Activated CD8-positive, alpha-beta T cell treated with anti-CD3 and anti-CD28 coated beads, Interleukin-2, amount 10 ng/mL, durations not matched to agents 7 days and 5 days (primary cell): ENCODE measurements at regions of chr15 and their contacts with region 1.

Region 1: GRCh38 chr15:99704444-99704838 is 28.8 kb downstream of the LYSMD4 start:
- DNase-seq: peak; percentile 65
- ATAC-seq: peak; percentile 71
- H3K4me3 Mint-ChIP-seq: no peak overlapping the region
- H3K27ac Mint-ChIP-seq: no peak overlapping the region
- H3K4me1 Mint-ChIP-seq: peaks cover 48% of the 10 kb centered on the region
- H3K27me3 Mint-ChIP-seq: no peaks in the 10 kb centered on the region

Region 2: GRCh38 chr15:99264125-99264524 is 440.3 kb before region 1 on chr15:
- CTCF ChIA-PET with region 1: interaction called, 120 read pairs
- POLR2A ChIA-PET with region 1: no interaction called
- DNase-seq: no peak
- ATAC-seq: peak; percentile 36
- H3K4me3 Mint-ChIP-seq: no peak overlapping the region
- H3K27ac Mint-ChIP-seq: no peak overlapping the region
- H3K4me1 Mint-ChIP-seq: peaks cover 23% of the 10 kb centered on the region
- H3K27me3 Mint-ChIP-seq: no peaks in the 10 kb centered on the region

Region 3: DNA sequence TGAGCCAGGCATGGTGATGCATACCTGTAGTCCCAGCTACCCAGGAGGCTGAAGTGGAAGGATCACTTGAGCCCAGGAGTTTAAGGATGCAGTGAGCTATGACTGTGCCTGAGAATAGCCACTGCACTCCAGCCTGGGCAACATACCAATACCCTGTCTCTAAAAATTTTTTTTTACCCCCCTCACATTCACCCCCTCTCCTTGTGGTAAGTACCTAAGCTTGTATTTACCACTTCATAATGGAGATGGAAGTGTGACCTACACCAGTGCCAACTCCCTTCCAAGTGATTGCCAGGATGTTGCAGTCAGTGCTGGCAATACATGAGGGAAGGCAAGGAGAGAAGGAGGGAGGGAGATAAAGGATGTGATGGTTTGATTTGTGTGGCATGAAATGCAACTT is 368.9 kb before region 1 on chr15:
- CTCF ChIA-PET with region 1: interaction called, 28 read pairs
- POLR2A ChIA-PET with region 1: no interaction called
- DNase-seq: no peak
- ATAC-seq: no peak
- H3K4me3 Mint-ChIP-seq: no peak overlapping the region
- H3K27ac Mint-ChIP-seq: no peak overlapping the region
- H3K4me1 Mint-ChIP-seq: no peaks in the 10 kb centered on the region
- H3K27me3 Mint-ChIP-seq: no peaks in the 10 kb centered on the region

Region 4: DNA sequence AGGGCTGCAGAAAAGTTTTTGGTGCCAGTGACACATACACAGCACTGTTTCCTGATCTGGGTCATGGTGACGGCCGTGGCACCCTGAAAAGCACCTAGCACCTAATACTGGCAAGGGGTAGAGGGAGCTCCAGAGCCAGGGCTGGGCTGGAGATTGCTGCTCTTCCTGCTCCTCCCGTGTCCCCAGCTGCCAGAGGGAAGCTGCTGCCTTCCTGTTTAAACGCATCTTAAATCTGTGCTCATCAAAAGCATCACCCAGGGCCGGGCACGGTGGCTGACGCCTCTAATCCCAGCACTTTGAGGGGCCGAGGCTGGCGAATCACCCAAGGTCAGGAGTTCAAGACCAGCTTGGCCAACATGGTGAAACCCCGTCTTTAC is 295.4 kb before region 1 on chr15:
- CTCF ChIA-PET with region 1: interaction called, 36 read pairs
- POLR2A ChIA-PET with region 1: no interaction called
- DNase-seq: peak; percentile 36
- ATAC-seq: peak; percentile 42
- H3K4me3 Mint-ChIP-seq: no peak overlapping the region
- H3K27ac Mint-ChIP-seq: no peak overlapping the region
- H3K4me1 Mint-ChIP-seq: peaks cover 15% of the 10 kb centered on the region
- H3K27me3 Mint-ChIP-seq: no peaks in the 10 kb centered on the region

Region 5: GRCh38 chr15:99565299-99566156 is 138.9 kb before region 1 on chr15 and contains the start of gene MEF2A:
- CTCF ChIA-PET with region 1: interaction called, 66 read pairs
- POLR2A ChIA-PET with region 1: interaction called, 6 read pairs
- DNase-seq: peak; percentile 94
- ATAC-seq: peak; percentile 82
- H3K4me3 Mint-ChIP-seq: peak within 1 kb of the TSS; percentile 93
- H3K27ac Mint-ChIP-seq: peak within 1 kb of the TSS; percentile 94
- H3K4me1 Mint-ChIP-seq: peaks cover 41% of the 10 kb centered on the region
- H3K27me3 Mint-ChIP-seq: peaks cover 10% of the 10 kb centered on the region
- total RNA-seq, gene MEF2A: 26.7 to 27.0 TPM

Region 6: GRCh38 chr15:99733268-99734039 is 29.0 kb after region 1 on chr15 and contains the start of gene LYSMD4:
- CTCF ChIA-PET with region 1: interaction called, 28 read pairs
- POLR2A ChIA-PET with region 1: interaction called, 18 read pairs
- DNase-seq: peak; percentile 99
- ATAC-seq: peak; percentile 100
- H3K4me3 Mint-ChIP-seq: peak within 1 kb of the TSS; percentile 77
- H3K27ac Mint-ChIP-seq: peak within 1 kb of the TSS; percentile 90
- H3K4me1 Mint-ChIP-seq: peaks cover 23% of the 10 kb centered on the region
- H3K27me3 Mint-ChIP-seq: no peaks in the 10 kb centered on the region
- total RNA-seq, gene LYSMD4: 8.9 to 13.0 TPM